Heart left ventricle (tissue), 16 donors: ENCODE measurements at regions of chrX and their contacts with region 1.

Region 1: GRCh38 chrX:56978172-56978571 is 17.2 kb downstream of the SPIN3 start:
- DNase-seq: peak in 2 of 5 donors; percentile 9 to 18
- ATAC-seq: peak in 2 of 4 donors; percentile 74 to 76
- H3K4me3 ChIP-seq: no peak overlapping the region
- H3K27ac ChIP-seq: no peak overlapping the region
- H3K4me1 ChIP-seq: no peaks in the 10 kb centered on the region
- H3K27me3 ChIP-seq: no peaks in the 10 kb centered on the region
- CTCF ChIP-seq: peak; percentile 37 to 68 (median 60)
- POLR2A ChIP-seq: no peak

Region 2: GRCh38 chrX:56802921-56803849 is 175.0 kb before region 1 on chrX:
- intact Hi-C with region 1: loop called in 5 of 10 experiments (anchors 2 to 10 kb)
- DNase-seq: peak; percentile 23 to 82 (median 65)
- ATAC-seq: peak; percentile 42 to 88 (median 80)
- H3K4me3 ChIP-seq: peak overlapping the region in 9 of 12 donors; percentile 4 to 67 (median 21)
- H3K27ac ChIP-seq: peak overlapping the region in 5 of 12 donors; percentile 66 to 83 (median 70)
- H3K4me1 ChIP-seq: peaks cover 0 to 22% (median 1%) of the 10 kb centered on the region in 12 donors
- H3K27me3 ChIP-seq: no peaks in the 10 kb centered on the region
- CTCF ChIP-seq: peak in 11 of 12 donors; percentile 14 to 62 (median 47)
- POLR2A ChIP-seq: no peak